ENCODE measurements at regions of chr3 and their contacts with region 1.

Region 1: GRCh38 chr3:127015282-127016042 is 32.5 kb downstream of the PLXNA1 start:
- DNase-seq: no peak
- H3K4me3 ChIP-seq: no peak overlapping the region
- H3K27ac ChIP-seq: peak overlapping the region; percentile 64 to 76
- H3K4me1 ChIP-seq: peaks cover 26 to 51% of the 10 kb centered on the region in 2 donors
- H3K27me3 ChIP-seq: no peaks in the 10 kb centered on the region
- CTCF ChIP-seq: no peak

Region 2: GRCh38 chr3:127002195-127003174 is 13.0 kb before region 1 on chr3:
- intact Hi-C with region 1: loop called (anchors 1 kb)
- DNase-seq: peak; percentile 38 to 95
- H3K4me3 ChIP-seq: peak overlapping the region in 1 of 2 donors; percentile 38
- H3K27ac ChIP-seq: peak overlapping the region; percentile 85 to 95
- H3K4me1 ChIP-seq: peaks cover 26 to 70% of the 10 kb centered on the region in 2 donors
- H3K27me3 ChIP-seq: no peaks in the 10 kb centered on the region
- CTCF ChIP-seq: peak; percentile 8 to 61 (median 52)

Region 3: DNA sequence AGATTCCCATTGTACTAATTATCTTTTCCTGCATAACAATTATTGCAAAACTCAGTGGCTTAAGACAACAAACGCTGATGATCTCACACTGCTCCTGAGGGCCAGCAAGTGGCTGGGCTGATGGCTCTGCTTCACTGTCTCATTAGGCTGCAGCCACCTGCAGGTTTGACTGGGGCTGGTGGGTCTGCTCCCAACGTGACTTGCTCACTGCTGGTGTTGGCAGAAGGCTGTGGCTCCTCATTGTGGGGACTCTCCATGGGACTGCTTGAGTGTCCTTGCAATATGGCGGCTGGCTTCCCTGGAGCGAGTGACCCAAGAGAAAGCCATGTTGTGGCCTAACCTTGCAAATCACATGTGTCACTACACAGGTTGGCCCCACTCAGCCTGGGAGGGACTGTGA is 38.5 kb after region 1 on chr3:
- intact Hi-C with region 1: no loop called
- DNase-seq: no peak
- H3K4me3 ChIP-seq: no peak overlapping the region
- H3K27ac ChIP-seq: no peak overlapping the region
- H3K4me1 ChIP-seq: peaks cover 0 to 11% of the 10 kb centered on the region in 2 donors
- H3K27me3 ChIP-seq: no peaks in the 10 kb centered on the region
- CTCF ChIP-seq: no peak

Region 4: GRCh38 chr3:127096256-127097071 is 81.0 kb after region 1 on chr3:
- intact Hi-C with region 1: no loop called
- DNase-seq: no peak
- H3K4me3 ChIP-seq: no peak overlapping the region
- H3K27ac ChIP-seq: no peak overlapping the region
- H3K4me1 ChIP-seq: no peaks in the 10 kb centered on the region
- H3K27me3 ChIP-seq: no peaks in the 10 kb centered on the region
- CTCF ChIP-seq: no peak